ENCODE measurements at regions of chr15 and their contacts with region 1.

Region 1: GRCh38 chr15:89874926-89875564 is 18.7 kb downstream of the AP3S2 start:
- DNase-seq: peak; percentile 67 to 75 (median 74)
- H3K4me3 ChIP-seq: no peak overlapping the region
- H3K4me3 Mint-ChIP-seq: no peak overlapping the region
- H3K27ac ChIP-seq: no peak overlapping the region
- H3K27ac Mint-ChIP-seq: peak overlapping the region in 6 of 7 donors; percentile 1 to 59 (median 29)
- H3K4me1 ChIP-seq: no peaks in the 10 kb centered on the region
- H3K4me1 Mint-ChIP-seq: peaks cover 4 to 7% (median 5%) of the 10 kb centered on the region in 4 donors
- H3K27me3 ChIP-seq: no peaks in the 10 kb centered on the region
- H3K27me3 Mint-ChIP-seq: no peaks in the 10 kb centered on the region

Region 2: DNA sequence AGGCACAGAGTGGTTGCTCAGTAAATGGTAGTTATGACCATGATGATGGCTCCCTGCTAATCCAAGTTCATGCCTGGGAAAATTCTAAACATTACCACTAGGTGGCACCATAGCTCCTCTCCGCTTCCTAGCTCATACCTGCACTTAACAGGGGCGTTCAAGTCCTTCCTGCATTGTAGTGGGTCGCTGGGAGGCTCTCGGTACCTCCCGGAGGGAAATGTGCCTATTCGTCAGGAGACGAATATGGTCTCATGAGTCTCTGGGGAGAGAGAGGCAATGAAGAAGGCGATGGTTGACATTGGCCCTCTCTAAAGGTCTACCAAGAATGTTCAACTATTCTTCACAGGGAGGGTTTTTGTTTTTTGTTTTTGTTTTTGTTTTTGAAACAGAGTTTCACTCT is 134.9 kb before region 1 on chr15:
- CTCF ChIA-PET with region 1: interaction called, 49 read pairs
- POLR2A ChIA-PET with region 1: no interaction called
- intact Hi-C with region 1: loop called (anchors 1 kb)
- DNase-seq: peak; percentile 50 to 67 (median 64)
- H3K4me3 ChIP-seq: no peak overlapping the region
- H3K4me3 Mint-ChIP-seq: no peak overlapping the region
- H3K27ac ChIP-seq: no peak overlapping the region
- H3K27ac Mint-ChIP-seq: no peak overlapping the region
- H3K4me1 ChIP-seq: no peaks in the 10 kb centered on the region
- H3K4me1 Mint-ChIP-seq: peaks cover 0 to 7% (median 2%) of the 10 kb centered on the region in 4 donors
- H3K27me3 ChIP-seq: no peaks in the 10 kb centered on the region
- H3K27me3 Mint-ChIP-seq: peaks cover 9 to 12% of the 10 kb centered on the region in 2 donors

Region 3: DNA sequence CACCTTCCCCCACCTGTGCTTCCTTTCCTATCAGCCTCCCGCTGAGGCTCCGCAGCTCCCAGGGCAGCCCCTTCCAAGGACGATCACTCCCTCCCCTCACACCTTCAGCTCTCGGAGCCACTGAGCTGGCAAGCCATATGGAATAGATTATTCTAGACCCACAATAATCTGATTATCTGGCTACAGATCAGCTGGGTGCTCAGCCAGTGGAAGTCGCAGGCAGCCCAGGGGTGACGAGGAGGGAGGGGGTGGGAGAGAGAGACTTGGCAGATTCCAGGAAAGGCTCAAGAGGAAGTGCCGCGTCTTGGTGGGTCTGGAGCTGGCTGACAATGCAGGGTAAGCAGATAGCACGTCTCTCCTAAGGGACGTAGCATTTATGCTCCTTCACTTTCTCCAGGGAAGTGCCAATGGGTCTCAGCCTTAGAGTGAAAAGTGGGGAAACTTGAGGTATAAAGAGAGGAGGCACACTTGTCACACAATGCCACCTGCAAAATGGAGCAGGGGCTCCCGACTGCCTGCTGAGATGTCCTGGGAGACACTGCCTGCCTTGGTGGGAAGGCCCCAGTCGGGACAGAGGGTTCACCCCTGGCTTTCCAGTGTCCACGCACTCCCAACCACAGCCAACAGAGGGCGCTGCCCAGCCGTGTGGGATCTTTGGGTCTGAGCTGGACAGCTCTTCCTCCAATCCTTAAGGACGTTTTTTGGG is 114.6 kb before region 1 on chr15:
- CTCF ChIA-PET with region 1: interaction called, 33 read pairs
- POLR2A ChIA-PET with region 1: no interaction called
- intact Hi-C with region 1: no loop called
- DNase-seq: peak in 4 of 5 donors; percentile 43 to 53 (median 50)
- H3K4me3 ChIP-seq: no peak overlapping the region
- H3K4me3 Mint-ChIP-seq: no peak overlapping the region
- H3K27ac ChIP-seq: no peak overlapping the region
- H3K27ac Mint-ChIP-seq: peak overlapping the region in 1 of 7 donors; percentile 68
- H3K4me1 ChIP-seq: no peaks in the 10 kb centered on the region
- H3K4me1 Mint-ChIP-seq: no peaks in the 10 kb centered on the region
- H3K27me3 ChIP-seq: no peaks in the 10 kb centered on the region
- H3K27me3 Mint-ChIP-seq: peaks cover 0 to 14% of the 10 kb centered on the region in 2 donors

Region 4: GRCh38 chr15:89888214-89888804 is 13.3 kb after region 1 on chr15:
- CTCF ChIA-PET with region 1: interaction called, 92 read pairs
- POLR2A ChIA-PET with region 1: interaction called, 11 read pairs
- intact Hi-C with region 1: no loop called
- DNase-seq: no peak
- H3K4me3 ChIP-seq: no peak overlapping the region
- H3K4me3 Mint-ChIP-seq: no peak overlapping the region
- H3K27ac ChIP-seq: no peak overlapping the region
- H3K27ac Mint-ChIP-seq: peak overlapping the region in 1 of 7 donors; percentile 24
- H3K4me1 ChIP-seq: peaks cover 33% of the 10 kb centered on the region
- H3K4me1 Mint-ChIP-seq: peaks cover 21 to 40% (median 30%) of the 10 kb centered on the region in 4 donors
- H3K27me3 ChIP-seq: no peaks in the 10 kb centered on the region
- H3K27me3 Mint-ChIP-seq: no peaks in the 10 kb centered on the region

Region 5: DNA sequence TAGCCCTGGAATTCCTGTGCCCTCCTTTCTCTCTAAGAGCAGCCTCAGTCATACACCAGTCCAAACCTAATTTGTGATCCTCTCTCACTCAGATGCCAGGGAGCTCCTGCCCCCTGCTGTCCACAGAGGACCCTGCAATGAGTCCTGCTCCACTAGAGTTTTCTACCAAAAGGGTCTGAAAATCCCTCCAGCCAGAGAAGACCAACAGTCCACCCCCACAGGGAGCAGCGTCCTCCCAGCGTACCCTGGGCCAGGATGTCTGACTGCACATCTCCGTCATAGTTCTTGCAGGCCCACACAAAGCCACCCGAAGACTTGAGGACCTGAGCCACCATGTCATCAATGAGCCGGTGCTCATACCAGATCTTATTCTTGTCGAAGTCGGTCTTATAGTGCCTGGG is 211.8 kb after region 1 on chr15:
- CTCF ChIA-PET with region 1: interaction called, 5 read pairs
- POLR2A ChIA-PET with region 1: no interaction called
- intact Hi-C with region 1: loop called (anchors 5 kb)
- DNase-seq: peak in 2 of 5 donors; percentile 45 to 50
- H3K4me3 ChIP-seq: no peak overlapping the region
- H3K4me3 Mint-ChIP-seq: peak overlapping the region in 1 of 8 donors; percentile 2
- H3K27ac ChIP-seq: no peak overlapping the region
- H3K27ac Mint-ChIP-seq: peak overlapping the region; percentile 56 to 86 (median 72)
- H3K4me1 ChIP-seq: no peaks in the 10 kb centered on the region
- H3K4me1 Mint-ChIP-seq: peaks cover 6 to 24% (median 7%) of the 10 kb centered on the region in 4 donors
- H3K27me3 ChIP-seq: no peaks in the 10 kb centered on the region
- H3K27me3 Mint-ChIP-seq: no peaks in the 10 kb centered on the region